ENCODE measurements at regions of chr17 and their contacts with region 1.

Region 1: DNA sequence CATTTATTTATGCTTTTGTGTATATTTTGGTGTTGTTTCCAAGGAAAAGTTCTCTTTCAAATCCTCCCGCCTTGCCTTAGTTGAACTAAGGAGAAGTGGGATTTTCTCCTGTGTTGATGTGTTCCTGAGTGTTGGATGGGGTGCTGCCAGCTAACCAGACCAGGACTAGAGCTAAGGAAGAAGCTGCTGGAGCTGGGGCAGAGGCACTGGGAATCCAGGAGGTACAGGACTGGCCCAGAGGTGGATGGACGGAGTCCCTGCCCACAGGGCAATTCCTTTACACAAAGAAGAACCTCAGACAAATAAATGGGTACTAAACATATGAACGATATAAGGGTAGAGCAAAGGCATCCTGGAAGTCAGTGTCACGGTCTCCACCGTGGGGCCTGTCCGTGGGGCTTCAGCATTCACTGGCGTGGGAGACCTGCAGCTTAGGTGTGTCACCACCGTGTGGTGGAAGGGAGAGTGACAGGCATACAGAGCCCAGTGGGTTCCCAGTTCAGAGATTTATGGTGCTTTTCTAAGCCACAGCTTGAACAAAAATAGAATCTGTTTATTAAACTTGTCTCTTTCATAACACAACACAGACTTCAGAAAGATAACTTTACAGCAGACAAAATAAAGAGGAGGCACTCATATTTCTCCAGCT is 270.7 kb downstream of the NTN1 start:
- DNase-seq: no peak

Region 2: GRCh38 chr17:8991514-8992285 is 300.3 kb before region 1 on chr17:
- intact Hi-C with region 1: loop called (anchors 5 kb)
- DNase-seq: no peak

Region 3: GRCh38 chr17:9115446-9116191 is 176.4 kb before region 1 on chr17:
- intact Hi-C with region 1: loop called (anchors 10 kb)
- DNase-seq: no peak

Region 4: GRCh38 chr17:9522074-9522473 is 230.0 kb after region 1 on chr17:
- intact Hi-C with region 1: loop called (anchors 10 kb)
- DNase-seq: no peak

Region 5: GRCh38 chr17:9790889-9791876 is 499.1 kb after region 1 on chr17 and contains the start of gene DHRS7C:
- intact Hi-C with region 1: no loop called
- DNase-seq: no peak
- total RNA-seq, gene DHRS7C: 0.89 TPM